Dendritic cell treated with granulocyte-macrophage colony-stimulating factor and Interleukin-4, amounts not matched to agents 40 ng/mL and 50 ng/mL, for 4 days (primary cell): ENCODE measurements at regions of chr17 and their contacts with region 1.

Region 1: GRCh38 chr17:30970831-30971567 is at the start of gene RNF135:
- H3K4me3 Mint-ChIP-seq: peak within 1 kb of the TSS; percentile 98
- H3K27ac Mint-ChIP-seq: peak within 1 kb of the TSS; percentile 94
- H3K4me1 Mint-ChIP-seq: peaks cover 51% of the 10 kb centered on the region
- H3K27me3 Mint-ChIP-seq: no peaks in the 10 kb centered on the region

Region 2: GRCh38 chr17:30906101-30906911 is 64.7 kb before region 1 on chr17 and contains the start of gene TEFM:
- intact Hi-C with region 1: loop called (anchors 5 kb)
- H3K4me3 Mint-ChIP-seq: peak within 1 kb of the TSS; percentile 91
- H3K27ac Mint-ChIP-seq: peak within 1 kb of the TSS; percentile 88
- H3K4me1 Mint-ChIP-seq: peaks cover 37% of the 10 kb centered on the region
- H3K27me3 Mint-ChIP-seq: no peaks in the 10 kb centered on the region

Region 3: DNA sequence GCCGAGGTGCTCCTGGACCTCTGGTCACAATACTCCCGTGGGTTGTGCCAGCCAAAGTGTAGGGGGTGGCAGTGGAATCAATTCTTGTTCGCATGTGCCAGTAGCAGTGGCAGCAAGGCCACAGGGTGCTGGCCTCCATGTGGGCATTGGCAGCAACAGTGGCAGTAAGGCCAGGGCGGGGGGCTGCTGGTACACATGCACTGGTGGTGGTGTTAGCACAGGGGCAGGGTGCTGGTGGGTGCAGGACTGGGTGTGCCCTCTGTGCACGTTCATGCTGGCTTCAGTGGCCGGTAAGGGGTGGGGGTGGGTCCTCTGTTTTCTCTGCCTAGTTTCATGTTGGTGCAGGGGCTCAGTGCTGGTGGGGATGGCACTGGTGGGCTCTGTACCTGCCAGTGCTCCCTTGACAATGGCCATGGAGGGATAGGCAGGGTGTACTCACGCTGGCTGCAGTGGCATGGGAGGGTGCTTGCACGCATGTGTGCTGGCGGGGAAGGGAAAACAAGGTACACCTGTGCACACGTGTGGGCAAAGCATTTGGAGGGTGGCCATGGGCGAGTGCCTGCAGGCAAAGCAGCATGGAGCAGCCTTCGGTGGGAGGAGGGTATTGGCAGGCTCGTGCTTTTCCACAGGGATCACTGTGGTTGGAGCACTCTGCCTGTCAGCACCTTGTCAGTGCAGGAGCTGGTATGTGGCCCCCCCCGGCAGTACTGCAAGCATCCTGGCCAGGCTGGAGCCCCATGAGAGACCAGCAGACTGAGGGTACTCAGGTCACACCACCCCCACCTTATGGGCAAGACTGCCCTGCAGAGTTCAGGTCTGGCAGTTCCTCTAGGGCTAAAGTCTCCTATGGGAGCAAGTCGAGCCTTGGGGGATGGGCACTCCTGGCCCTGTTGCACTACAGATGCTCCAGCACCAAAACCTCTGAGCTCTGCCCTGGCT is 159.6 kb after region 1 on chr17:
- intact Hi-C with region 1: no loop called
- H3K4me3 Mint-ChIP-seq: no peak overlapping the region
- H3K27ac Mint-ChIP-seq: no peak overlapping the region
- H3K4me1 Mint-ChIP-seq: peaks cover 22% of the 10 kb centered on the region
- H3K27me3 Mint-ChIP-seq: no peaks in the 10 kb centered on the region